HEK293 (cell line): ENCODE measurements at regions of chr2 and their contacts with region 1.

Region 1: DNA sequence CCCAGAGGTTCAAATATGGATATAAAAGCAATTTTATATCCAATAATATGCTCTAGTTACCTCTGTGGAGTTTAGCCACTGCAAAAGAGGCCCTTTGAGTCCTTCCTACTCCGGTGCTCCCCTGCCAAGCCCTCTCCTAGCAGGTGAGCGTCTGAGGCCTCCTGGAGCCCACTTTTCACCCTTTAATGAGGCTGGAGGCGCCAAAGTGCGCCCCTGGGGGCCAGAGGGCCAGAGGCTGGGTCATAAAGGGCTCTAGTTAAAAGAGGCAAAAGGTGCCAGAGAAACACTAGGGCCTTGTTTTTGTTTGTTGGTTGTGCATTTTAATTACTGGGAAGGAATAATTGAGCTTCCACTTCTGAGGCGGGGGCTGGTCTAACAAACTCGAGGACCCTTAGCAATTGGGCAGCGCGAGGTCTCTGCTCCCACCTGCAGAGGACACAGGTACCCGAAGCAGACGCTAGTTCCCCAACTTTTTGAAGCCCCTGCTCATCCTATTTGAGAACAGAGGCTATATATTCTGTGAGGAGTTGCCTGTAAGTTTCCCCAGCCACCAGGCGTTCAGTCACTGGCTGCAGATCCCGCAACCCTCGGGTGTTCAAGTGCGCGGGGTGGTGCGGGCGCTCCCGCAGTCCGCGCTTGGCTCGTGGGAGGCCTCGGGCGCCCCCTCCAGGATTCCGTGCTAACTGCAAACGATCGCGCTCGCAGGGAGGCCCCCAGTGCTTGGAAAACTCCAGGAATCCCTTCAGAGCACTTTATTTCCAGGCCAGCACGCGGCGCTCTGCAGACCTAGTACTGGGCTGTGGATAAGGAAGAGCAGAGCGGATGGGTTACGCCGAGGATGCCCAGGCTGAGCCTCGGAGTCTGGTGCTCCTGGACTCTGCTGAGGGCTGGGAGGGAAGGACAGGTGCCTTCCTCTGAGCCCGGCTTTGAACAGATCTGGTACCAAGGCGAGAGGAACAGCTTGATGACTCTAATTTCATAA is 14.1 kb downstream of the MSGN1 start:
- H3K4me3 ChIP-seq: no peak overlapping the region
- H3K27ac ChIP-seq: no peak overlapping the region
- H3K4me1 ChIP-seq: no peaks in the 10 kb centered on the region
- CTCF ChIP-seq: peak; percentile 96

Region 2: GRCh38 chr2:17845806-17846205 is 15.5 kb after region 1 on chr2:
- CTCF ChIA-PET with region 1: interaction called, 17 read pairs
- POLR2A ChIA-PET with region 1: no interaction called
- H3K4me3 ChIP-seq: no peak overlapping the region
- H3K27ac ChIP-seq: no peak overlapping the region
- H3K4me1 ChIP-seq: no peaks in the 10 kb centered on the region
- CTCF ChIP-seq: no peak